Panc1 (cell line): ENCODE measurements at regions of chr10 and their contacts with region 1.

Region 1: DNA sequence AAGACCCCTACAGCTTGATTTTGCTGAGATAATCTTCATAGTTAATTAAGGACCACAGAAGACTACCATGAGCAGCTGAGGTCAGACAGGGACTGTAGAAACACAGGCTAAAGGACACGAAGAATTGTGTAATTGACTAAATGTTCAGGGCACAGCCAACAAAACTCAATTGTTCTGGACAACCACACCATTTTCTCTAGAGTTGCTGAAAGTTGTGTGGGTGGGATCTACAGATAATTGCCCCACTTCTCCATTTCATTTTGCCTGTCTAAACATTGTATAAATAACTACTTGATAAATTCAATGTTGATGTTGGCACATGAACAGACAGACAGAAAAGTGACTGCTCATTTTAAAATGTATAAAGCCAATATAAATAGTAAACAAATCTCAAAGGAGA is 39.0 kb upstream of the SLC16A12 start:
- DNase-seq: no peak
- ATAC-seq: no peak
- H3K4me3 ChIP-seq: no peak overlapping the region
- H3K27ac ChIP-seq: no peak overlapping the region
- H3K4me1 ChIP-seq: no peaks in the 10 kb centered on the region
- H3K27me3 ChIP-seq: no peaks in the 10 kb centered on the region
- CTCF ChIP-seq: no peak

Region 2: DNA sequence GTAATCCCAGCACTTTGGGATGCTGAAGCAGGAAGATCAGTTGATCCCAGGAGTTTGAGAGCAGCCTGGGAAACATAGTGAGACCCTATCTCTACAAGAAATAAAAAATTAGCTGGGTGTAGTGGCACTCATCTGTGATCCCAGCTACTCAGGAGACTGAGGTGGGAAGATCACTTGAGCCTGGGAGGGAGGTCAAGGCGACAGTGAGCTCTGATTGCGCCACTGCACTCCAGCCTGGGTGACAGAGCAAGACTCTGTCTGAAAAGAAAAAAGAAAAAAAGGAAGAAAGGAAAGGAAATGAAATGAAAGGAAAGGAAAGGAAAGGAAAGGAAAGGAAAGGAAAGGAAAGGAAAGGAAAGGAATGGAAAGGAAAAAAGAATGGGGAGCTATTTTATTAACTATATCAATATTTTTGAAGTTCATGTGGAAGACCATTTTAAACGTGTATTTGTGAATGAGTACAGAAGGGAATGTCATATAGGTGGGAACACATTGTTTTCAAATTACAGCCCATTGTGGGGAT is 279.6 kb before region 1 on chr10:
- CTCF ChIA-PET with region 1: no interaction called
- POLR2A ChIA-PET with region 1: interaction called, 19 read pairs
- in situ Hi-C with region 1: no loop called
- intact Hi-C with region 1: no loop called
- DNase-seq: no peak
- ATAC-seq: no peak
- H3K4me3 ChIP-seq: no peak overlapping the region
- H3K27ac ChIP-seq: peak overlapping the region; percentile 12; the same call in 1 of the 2 replicates
- H3K4me1 ChIP-seq: no peaks in the 10 kb centered on the region; the same call in 1 of the 2 replicates
- H3K27me3 ChIP-seq: no peaks in the 10 kb centered on the region
- CTCF ChIP-seq: no peak

Region 3: DNA sequence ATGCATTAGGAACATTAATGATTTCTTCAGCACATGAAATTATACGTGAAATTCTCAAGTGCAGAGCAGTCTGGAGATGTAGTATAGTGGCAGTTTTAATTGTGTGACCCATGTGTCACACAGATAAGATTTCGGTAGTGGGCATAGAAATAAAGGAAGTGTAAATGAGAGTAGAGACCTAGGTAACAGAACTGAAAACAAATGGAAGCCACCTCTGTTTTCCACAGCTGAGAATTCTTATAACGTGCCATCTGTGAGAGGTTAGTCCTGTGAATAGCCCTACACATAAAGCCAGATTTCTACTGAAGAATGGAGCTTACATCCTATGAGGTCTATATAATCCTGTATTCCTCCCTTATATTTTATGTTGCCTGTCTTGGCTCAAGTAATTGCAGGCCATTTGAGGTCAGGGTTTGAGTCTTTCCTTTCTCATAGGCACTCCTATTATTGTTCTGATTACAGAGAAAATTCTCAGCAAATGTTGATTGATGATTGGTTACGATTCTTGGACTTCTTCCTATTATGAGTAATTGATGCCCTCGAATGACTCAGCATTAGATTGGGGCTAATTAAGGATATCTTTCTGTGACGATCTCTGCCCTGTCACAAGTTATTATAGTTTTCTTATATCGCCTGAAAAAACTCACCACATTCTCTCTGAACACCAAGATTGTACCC is 385.2 kb after region 1 on chr10:
- CTCF ChIA-PET with region 1: no interaction called
- POLR2A ChIA-PET with region 1: no interaction called
- in situ Hi-C with region 1: no loop called
- intact Hi-C with region 1: no loop called
- DNase-seq: no peak
- ATAC-seq: no peak
- H3K4me3 ChIP-seq: no peak overlapping the region
- H3K27ac ChIP-seq: no peak overlapping the region
- H3K4me1 ChIP-seq: no peaks in the 10 kb centered on the region
- H3K27me3 ChIP-seq: 0 out of 2 replicates have a peak, but pooled peaks cover 2% of the 10 kb centered on the region
- CTCF ChIP-seq: no peak